Stomach (tissue), 19 donors: ENCODE measurements at regions of chr1 and their contacts with region 1.

Region 1: GRCh38 chr1:67053785-67054772 is at the start of gene SLC35D1:
- DNase-seq: peak; percentile 69 to 93
- H3K4me3 ChIP-seq: peak within 1 kb of the TSS; percentile 73 to 85 (median 76)
- H3K27ac ChIP-seq: peak within 1 kb of the TSS; percentile 95 to 99 (median 97)
- H3K4me1 ChIP-seq: peaks cover 16 to 41% (median 30%) of the 10 kb centered on the region in 4 donors
- H3K27me3 ChIP-seq: no peaks in the 10 kb centered on the region
- CTCF ChIP-seq: no peak
- EP300 ChIP-seq: peak; percentile 8
- POLR2A ChIP-seq: peak in 1 of 4 donors; percentile 28
- total RNA-seq, gene SLC35D1: 8.8 to 40.8 (median 19.4) TPM

Region 2: GRCh38 chr1:66996018-66996682 is 57.9 kb before region 1 on chr1:
- intact Hi-C with region 1: no loop called
- DNase-seq: peak; percentile 78 to 91
- H3K4me3 ChIP-seq: no peak overlapping the region
- H3K27ac ChIP-seq: no peak overlapping the region
- H3K4me1 ChIP-seq: peaks cover 0 to 34% (median 13%) of the 10 kb centered on the region in 4 donors
- H3K27me3 ChIP-seq: no peaks in the 10 kb centered on the region
- CTCF ChIP-seq: peak in 5 of 7 experiments; percentile 55 to 94 (median 65)
- EP300 ChIP-seq: no peak
- POLR2A ChIP-seq: no peak

Region 3: DNA sequence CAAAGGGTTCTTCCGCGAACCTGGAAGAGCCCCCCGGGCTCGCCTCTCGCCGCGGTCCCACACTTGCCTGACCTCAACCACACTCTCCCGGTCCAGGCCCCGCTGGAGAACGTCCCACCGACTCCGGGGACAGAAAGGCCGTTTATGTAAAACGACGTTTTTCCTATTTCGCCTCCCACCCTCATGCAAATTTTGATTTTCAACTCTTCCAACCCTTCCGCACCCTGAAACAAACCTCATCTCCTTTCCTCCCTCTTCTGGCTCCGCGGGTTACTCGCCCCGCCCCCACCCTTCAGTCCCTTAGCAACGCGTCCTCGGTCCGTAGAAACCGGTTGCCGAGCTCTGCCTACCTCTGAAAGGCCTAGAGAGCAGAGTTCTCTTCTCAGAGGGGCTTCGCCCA is 80.6 kb after region 1 on chr1 and contains the start of gene C1orf141:
- intact Hi-C with region 1: loop called (anchors 10 kb)
- DNase-seq: peak in 1 of 2 donors; percentile 77
- H3K4me3 ChIP-seq: peak within 1 kb of the TSS; percentile 31 to 33 (median 31)
- H3K27ac ChIP-seq: no peak within 1 kb of the TSS
- H3K4me1 ChIP-seq: peaks cover 20 to 49% (median 26%) of the 10 kb centered on the region in 4 donors
- H3K27me3 ChIP-seq: no peaks in the 10 kb centered on the region
- CTCF ChIP-seq: no peak
- EP300 ChIP-seq: no peak
- POLR2A ChIP-seq: no peak
- total RNA-seq, gene C1orf141: not detected